ENCODE measurements at regions of chr5 and their contacts with region 1.

Region 1: DNA sequence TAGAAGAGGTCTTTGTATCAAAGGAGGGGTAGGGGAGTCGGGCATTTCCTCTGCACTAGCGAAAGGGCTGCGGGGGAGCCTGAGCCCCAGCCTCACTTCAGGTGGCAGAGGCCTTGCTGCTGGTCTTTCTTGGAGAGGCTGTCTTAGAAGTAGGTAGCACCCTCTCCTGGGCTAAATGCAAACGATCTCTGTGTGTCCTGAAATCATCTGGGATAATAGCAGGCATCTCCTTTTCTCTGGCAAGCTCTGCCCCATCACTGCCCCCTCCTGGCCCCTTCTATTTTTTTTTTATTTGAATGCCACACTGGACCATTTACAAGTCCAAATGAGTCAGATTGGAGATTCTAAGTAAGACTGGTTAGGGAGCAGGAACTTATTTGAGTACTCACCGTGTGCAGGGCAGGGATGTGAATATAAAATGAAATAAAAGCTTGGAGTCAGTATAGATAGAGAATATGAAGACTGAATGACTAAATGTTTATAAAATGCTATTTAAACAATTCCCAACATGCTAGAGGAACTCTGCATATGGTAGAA is 137.1 kb downstream of the FGF1 start:
- DNase-seq: peak in 4 of 5 donors; percentile 41 to 66 (median 60)
- ATAC-seq: peak; percentile 74 to 94 (median 86)
- H3K4me3 ChIP-seq: no peak overlapping the region
- H3K27ac ChIP-seq: peak overlapping the region in 2 of 12 donors; percentile 21 to 31
- H3K4me1 ChIP-seq: peaks cover 0 to 49% (median 20%) of the 10 kb centered on the region in 12 donors
- H3K27me3 ChIP-seq: peaks cover 0 to 27% (median 0%) of the 10 kb centered on the region in 9 donors
- CTCF ChIP-seq: peak; percentile 64 to 91 (median 78)
- POLR2A ChIP-seq: no peak

Region 2: GRCh38 chr5:141992349-141992963 is 556.4 kb before region 1 on chr5:
- intact Hi-C with region 1: loop called in 3 of 10 experiments (anchors 10 kb)
- DNase-seq: peak in 4 of 5 donors; percentile 54 to 65 (median 65)
- ATAC-seq: peak; percentile 59 to 78 (median 72)
- H3K4me3 ChIP-seq: no peak overlapping the region
- H3K27ac ChIP-seq: peak overlapping the region in 1 of 12 donors; percentile 11
- H3K4me1 ChIP-seq: peaks cover 0 to 16% (median 6%) of the 10 kb centered on the region in 12 donors
- H3K27me3 ChIP-seq: no peaks in the 10 kb centered on the region
- CTCF ChIP-seq: peak; percentile 71 to 91 (median 80)
- POLR2A ChIP-seq: no peak

Region 3: DNA sequence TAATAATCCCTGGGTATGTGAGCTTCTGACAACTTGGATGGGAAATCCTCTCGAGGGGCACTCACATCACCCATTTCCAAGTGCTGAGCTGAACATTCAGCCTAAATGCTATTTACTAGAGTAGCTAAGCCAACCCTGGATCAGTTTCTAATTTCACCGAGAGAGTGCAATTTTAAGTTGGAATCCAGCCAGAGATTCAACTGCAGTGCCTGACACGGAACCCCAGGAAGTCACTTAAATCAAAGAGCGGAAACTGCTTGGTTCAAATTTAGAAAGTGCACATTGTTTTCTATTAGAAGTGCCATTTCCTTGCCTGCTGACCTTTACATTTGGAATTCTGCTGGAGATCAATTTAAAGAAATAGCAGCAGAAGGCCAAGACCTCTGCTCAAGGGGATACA is 232.8 kb before region 1 on chr5:
- intact Hi-C with region 1: loop called in 9 of 10 experiments (anchors 2 to 10 kb)
- DNase-seq: no peak
- ATAC-seq: peak in 3 of 4 donors; percentile 16 to 38 (median 32)
- H3K4me3 ChIP-seq: peak overlapping the region in 6 of 12 donors; percentile 2 to 29 (median 20)
- H3K27ac ChIP-seq: peak overlapping the region in 11 of 12 donors; percentile 27 to 97 (median 83)
- H3K4me1 ChIP-seq: peaks cover 20 to 98% (median 84%) of the 10 kb centered on the region in 12 donors
- H3K27me3 ChIP-seq: peaks cover 0 to 4% (median 0%) of the 10 kb centered on the region in 9 donors
- CTCF ChIP-seq: no peak
- POLR2A ChIP-seq: no peak

Region 4: DNA sequence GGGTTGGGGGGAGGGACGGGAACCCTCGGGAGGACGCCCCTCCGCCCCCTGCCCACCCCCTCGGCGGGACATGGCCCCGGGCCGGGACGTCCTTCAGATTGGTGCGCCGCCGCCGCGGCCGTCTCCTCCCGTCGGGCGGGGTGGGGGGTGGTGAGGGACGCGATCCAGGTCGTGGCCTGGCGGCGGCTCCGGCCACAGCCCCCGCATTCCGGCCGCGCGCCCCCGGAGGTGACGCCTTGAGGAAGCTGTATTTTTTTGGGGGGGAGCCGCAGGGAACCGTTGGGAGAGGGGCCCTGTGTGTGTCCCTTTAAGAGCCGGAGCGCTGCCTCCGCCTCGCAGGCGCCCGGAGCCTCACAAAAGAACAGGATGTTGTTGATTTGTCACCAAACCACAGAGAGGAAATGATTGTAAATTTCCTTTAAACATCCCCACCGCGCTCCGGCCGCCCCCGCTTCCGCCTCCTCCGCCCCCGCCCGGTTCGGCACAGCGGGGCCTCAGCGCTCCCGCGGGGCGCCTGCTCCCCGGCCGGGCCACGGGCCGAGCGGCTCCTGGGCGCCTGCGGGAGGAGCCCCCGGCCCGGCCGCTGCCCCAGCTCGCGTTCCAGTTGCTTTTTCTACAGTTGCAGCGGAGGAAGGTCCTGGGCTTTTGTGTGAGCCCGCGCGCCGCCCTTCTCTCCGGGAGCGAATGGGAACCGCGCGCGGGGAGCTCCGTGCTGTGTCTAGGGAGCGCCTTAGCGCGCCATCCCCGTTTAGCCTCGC is 191.9 kb before region 1 on chr5:
- intact Hi-C with region 1: loop called in 5 of 10 experiments (anchors 5 to 10 kb)
- DNase-seq: peak; percentile 89 to 93 (median 91)
- ATAC-seq: peak; percentile 74 to 93 (median 92)
- H3K4me3 ChIP-seq: peak overlapping the region; percentile 52 to 73 (median 64)
- H3K27ac ChIP-seq: peak overlapping the region; percentile 85 to 97 (median 94)
- H3K4me1 ChIP-seq: peaks cover 0 to 22% (median 12%) of the 10 kb centered on the region in 12 donors
- H3K27me3 ChIP-seq: peaks cover 0 to 33% (median 0%) of the 10 kb centered on the region in 9 donors
- CTCF ChIP-seq: peak in 1 of 12 donors; percentile 16
- POLR2A ChIP-seq: peak; percentile 7 to 62

Region 5: GRCh38 chr5:142426129-142427014 is 122.4 kb before region 1 on chr5:
- intact Hi-C with region 1: loop called in 8 of 10 experiments (anchors 5 to 10 kb)
- DNase-seq: peak; percentile 77 to 86 (median 82)
- ATAC-seq: peak; percentile 53 to 86 (median 76)
- H3K4me3 ChIP-seq: peak overlapping the region in 2 of 12 donors; percentile 1 to 16
- H3K27ac ChIP-seq: peak overlapping the region; percentile 12 to 80 (median 52)
- H3K4me1 ChIP-seq: peaks cover 0 to 51% (median 30%) of the 10 kb centered on the region in 12 donors
- H3K27me3 ChIP-seq: no peaks in the 10 kb centered on the region
- CTCF ChIP-seq: no peak
- POLR2A ChIP-seq: no peak

Region 6: GRCh38 chr5:142492781-142493281 is 56.0 kb before region 1 on chr5:
- intact Hi-C with region 1: loop called in 2 of 10 experiments (anchors 5 kb)
- DNase-seq: no peak
- ATAC-seq: peak; percentile 35 to 62 (median 49)
- H3K4me3 ChIP-seq: no peak overlapping the region
- H3K27ac ChIP-seq: peak overlapping the region; percentile 27 to 72 (median 58)
- H3K4me1 ChIP-seq: peaks cover 0 to 50% (median 20%) of the 10 kb centered on the region in 12 donors
- H3K27me3 ChIP-seq: no peaks in the 10 kb centered on the region
- CTCF ChIP-seq: no peak
- POLR2A ChIP-seq: no peak

Measured in heart left ventricle (tissue), 16 donors.